Activated CD4-positive, alpha-beta memory T cell treated with anti-CD3 and anti-CD28 coated beads, Interleukin-2, amount 10 ng/mL, durations not matched to agents 7 days and 5 days (primary cell): ENCODE measurements at regions of chr15 and their contacts with region 1.

Region 1: GRCh38 chr15:88918738-88919137 is 5.6 kb upstream of the MFGE8 start:
- DNase-seq: peak; percentile 59
- H3K4me3 Mint-ChIP-seq: no peak overlapping the region
- H3K27ac Mint-ChIP-seq: peak overlapping the region; percentile 68
- H3K4me1 Mint-ChIP-seq: peaks cover 41% of the 10 kb centered on the region
- H3K27me3 Mint-ChIP-seq: peaks cover 5% of the 10 kb centered on the region

Region 2: DNA sequence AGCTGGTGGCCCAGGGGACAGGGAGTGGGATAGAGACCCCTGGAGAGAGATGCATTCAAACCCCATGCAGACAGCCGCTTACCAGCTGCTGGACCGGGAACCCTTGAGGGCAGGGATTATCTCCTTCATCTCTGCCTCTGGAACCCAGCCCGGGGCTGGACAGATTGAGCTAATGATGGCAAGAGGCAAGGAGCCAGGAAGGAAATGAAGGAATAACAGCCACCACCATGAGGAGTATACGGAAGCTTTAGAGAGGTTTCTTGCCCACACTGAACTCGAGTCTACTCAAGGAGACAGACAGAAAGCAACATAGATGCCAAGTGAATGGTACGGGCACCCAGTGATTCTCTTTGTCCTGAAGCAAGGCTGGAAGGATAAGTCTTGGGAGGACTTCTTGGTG is 46.6 kb before region 1 on chr15:
- CTCF ChIA-PET with region 1: no interaction called
- POLR2A ChIA-PET with region 1: no interaction called
- DNase-seq: no peak
- H3K4me3 Mint-ChIP-seq: no peak overlapping the region
- H3K27ac Mint-ChIP-seq: no peak overlapping the region
- H3K4me1 Mint-ChIP-seq: no peaks in the 10 kb centered on the region
- H3K27me3 Mint-ChIP-seq: no peaks in the 10 kb centered on the region

Region 3: GRCh38 chr15:88894348-88894818 is 24.4 kb before region 1 on chr15:
- CTCF ChIA-PET with region 1: interaction called, 11 read pairs
- POLR2A ChIA-PET with region 1: interaction called, 3 read pairs
- DNase-seq: peak; percentile 88
- H3K4me3 Mint-ChIP-seq: peak overlapping the region; percentile 79
- H3K27ac Mint-ChIP-seq: peak overlapping the region; percentile 49
- H3K4me1 Mint-ChIP-seq: peaks cover 38% of the 10 kb centered on the region
- H3K27me3 Mint-ChIP-seq: no peaks in the 10 kb centered on the region

Region 4: GRCh38 chr15:89017370-89018066 is 98.8 kb after region 1 on chr15:
- CTCF ChIA-PET with region 1: interaction called, 10 read pairs
- POLR2A ChIA-PET with region 1: interaction called, 3 read pairs
- DNase-seq: peak; percentile 86
- H3K4me3 Mint-ChIP-seq: peak overlapping the region; percentile 57
- H3K27ac Mint-ChIP-seq: peak overlapping the region; percentile 57
- H3K4me1 Mint-ChIP-seq: peaks cover 37% of the 10 kb centered on the region
- H3K27me3 Mint-ChIP-seq: peaks cover 33% of the 10 kb centered on the region